Colonic mucosa (tissue), 4 donors: ENCODE measurements at regions of chr18 and their contacts with region 1.

Region 1: DNA sequence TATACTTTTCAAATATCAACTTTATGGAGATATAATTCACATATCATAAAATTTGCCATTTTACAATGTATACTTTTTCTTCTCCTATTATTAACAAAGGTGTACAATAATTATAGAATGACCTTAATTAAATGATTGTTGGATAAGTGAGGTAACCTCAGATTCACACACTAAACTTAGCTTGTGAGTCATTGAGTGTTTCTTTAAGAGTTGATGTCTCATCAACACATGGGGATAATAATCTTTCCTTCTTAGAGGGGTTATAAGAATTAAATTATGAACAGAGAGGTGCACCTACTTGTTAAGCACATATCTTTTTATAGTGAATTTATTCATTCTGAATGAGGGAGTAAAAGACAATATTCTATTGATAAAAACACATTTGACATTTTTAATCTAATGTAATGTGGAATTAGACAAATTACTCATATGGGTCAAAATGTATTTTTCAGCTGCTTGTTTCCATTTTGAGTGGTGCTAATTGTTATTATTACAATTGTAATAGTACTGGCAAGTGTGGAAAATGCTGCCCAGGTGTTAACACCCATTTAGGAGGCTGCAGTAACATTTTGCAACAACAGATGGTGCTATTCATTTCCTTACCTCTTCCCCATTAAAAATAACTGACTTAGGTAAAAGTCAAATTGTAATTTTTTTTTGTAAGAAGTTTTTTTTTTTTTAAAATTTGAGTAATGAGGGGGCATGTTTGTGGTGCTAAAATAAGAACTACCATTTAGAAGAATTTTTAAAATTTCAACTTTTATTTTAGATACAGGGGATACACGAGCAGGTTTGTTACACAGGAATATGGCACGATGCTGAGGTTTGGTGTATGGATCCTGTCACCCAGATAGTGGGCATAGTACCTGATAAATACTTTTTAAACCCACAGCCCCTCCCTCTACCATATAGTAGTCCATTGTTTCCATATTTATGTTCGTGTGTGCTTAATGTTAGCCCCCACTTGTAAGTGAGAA is 32.1 kb upstream of the DYNAP start:
- DNase-seq: peak; percentile 26
- H3K4me3 ChIP-seq: no peak overlapping the region
- H3K27ac ChIP-seq: no peak overlapping the region
- H3K4me1 ChIP-seq: no peaks in the 10 kb centered on the region
- H3K27me3 ChIP-seq: no peaks in the 10 kb centered on the region
- CTCF ChIP-seq: peak; percentile 83

Region 2: GRCh38 chr18:54423831-54424230 is 135.1 kb before region 1 on chr18:
- intact Hi-C with region 1: no loop called
- DNase-seq: no peak
- H3K4me3 ChIP-seq: no peak overlapping the region
- H3K27ac ChIP-seq: no peak overlapping the region
- H3K4me1 ChIP-seq: no peaks in the 10 kb centered on the region
- H3K27me3 ChIP-seq: no peaks in the 10 kb centered on the region
- CTCF ChIP-seq: no peak

Region 3: DNA sequence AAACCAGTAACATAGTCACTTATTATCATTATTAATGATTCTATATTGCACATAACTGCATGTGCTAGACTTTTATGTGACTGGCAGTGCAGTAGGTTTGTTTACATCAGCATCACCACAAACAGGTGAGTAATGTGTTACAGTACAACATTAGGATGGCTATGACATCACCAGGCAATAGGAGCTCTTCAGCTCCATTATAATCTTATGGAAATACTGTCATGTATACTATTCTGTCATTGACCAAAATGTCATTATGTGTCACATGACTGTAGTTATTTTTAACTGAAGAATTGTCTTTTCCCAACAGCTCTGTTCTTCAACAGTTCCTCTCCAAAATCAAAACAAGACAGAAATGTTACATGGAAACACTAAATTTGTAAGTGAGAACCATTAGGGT is 104.9 kb before region 1 on chr18:
- intact Hi-C with region 1: no loop called
- DNase-seq: no peak
- H3K4me3 ChIP-seq: no peak overlapping the region
- H3K27ac ChIP-seq: no peak overlapping the region
- H3K4me1 ChIP-seq: no peaks in the 10 kb centered on the region
- H3K27me3 ChIP-seq: no peaks in the 10 kb centered on the region
- CTCF ChIP-seq: no peak

Region 4: DNA sequence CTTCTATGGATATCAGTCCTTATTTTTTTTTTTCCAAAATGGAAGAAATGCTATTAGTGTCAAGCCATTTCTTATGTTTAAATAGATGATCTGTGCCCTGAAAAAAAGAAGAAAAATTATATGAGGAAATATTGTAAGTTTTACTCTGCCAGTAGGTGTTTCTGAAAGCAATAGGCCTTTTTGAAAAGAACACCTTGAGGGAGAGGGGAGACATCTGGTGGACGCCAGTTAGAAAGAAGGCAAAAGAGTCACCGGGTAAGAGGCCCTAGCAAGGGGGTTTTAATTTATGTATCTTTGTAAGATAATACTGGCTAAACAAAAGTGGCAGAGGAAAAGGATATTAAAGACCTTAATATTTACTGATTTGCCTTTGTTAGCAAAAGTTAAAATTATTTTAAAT is 88.3 kb after region 1 on chr18:
- intact Hi-C with region 1: loop called (anchors 10 kb)
- DNase-seq: peak; percentile 36
- H3K4me3 ChIP-seq: no peak overlapping the region
- H3K27ac ChIP-seq: no peak overlapping the region
- H3K4me1 ChIP-seq: no peaks in the 10 kb centered on the region
- H3K27me3 ChIP-seq: no peaks in the 10 kb centered on the region
- CTCF ChIP-seq: no peak

Region 5: GRCh38 chr18:54983041-54983686 is 424.3 kb after region 1 on chr18:
- intact Hi-C with region 1: loop called (anchors 10 kb)
- DNase-seq: no peak
- H3K4me3 ChIP-seq: no peak overlapping the region
- H3K27ac ChIP-seq: no peak overlapping the region
- H3K4me1 ChIP-seq: no peaks in the 10 kb centered on the region
- H3K27me3 ChIP-seq: no peaks in the 10 kb centered on the region
- CTCF ChIP-seq: peak; percentile 73